Mammary epithelial cell (primary cell): ENCODE measurements at regions of chr2 and their contacts with region 1.

Region 1: DNA sequence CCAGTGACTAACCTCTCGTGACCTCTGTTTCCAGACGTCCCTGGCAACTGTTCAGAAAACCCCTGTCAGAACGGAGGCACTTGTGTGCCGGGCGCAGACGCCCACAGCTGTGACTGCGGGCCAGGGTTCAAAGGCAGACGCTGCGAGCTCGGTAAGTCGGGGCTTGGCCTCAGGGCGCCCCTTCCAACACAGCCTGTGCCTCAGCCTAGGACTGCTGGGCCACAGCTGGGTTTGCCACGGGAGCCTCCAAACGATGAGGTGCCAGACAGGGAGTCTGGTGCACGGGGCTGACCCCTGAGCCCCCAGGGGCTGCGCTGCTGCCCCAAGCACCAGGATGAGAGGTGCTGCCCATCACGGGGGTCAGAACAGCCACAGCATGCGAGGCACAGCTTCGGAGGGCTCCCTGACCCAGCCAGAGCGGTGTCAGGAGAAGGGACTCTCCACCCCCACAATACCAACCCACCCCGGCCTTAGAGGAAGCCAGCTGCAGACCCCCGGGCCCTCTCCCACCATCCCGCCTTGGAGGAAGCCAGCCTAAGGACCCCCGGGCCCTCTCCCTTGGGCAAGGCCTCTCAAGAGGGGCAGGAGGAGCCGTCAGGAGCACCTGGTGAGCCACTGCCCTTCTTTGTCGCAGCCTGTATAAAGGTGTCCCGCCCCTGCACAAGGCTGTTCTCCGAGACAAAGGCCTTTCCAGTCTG is 20.3 kb downstream of the MTERF4 start:
- DNase-seq: no peak
- H3K4me3 ChIP-seq: no peak overlapping the region
- H3K27ac ChIP-seq: no peak overlapping the region
- H3K4me1 ChIP-seq: no peaks in the 10 kb centered on the region
- H3K27me3 ChIP-seq: no peaks in the 10 kb centered on the region
- CTCF ChIP-seq: no peak

Region 2: GRCh38 chr2:240913810-240914644 is 167.8 kb before region 1 on chr2:
- CTCF ChIA-PET with region 1: no interaction called
- dilution Hi-C with region 1: no loop called
- in situ Hi-C with region 1: no loop called
- intact Hi-C with region 1: loop called (anchors 1 kb)
- DNase-seq: no peak
- H3K4me3 ChIP-seq: no peak overlapping the region
- H3K27ac ChIP-seq: no peak overlapping the region
- H3K4me1 ChIP-seq: peaks cover 27% of the 10 kb centered on the region
- H3K27me3 ChIP-seq: peaks cover 7% of the 10 kb centered on the region
- CTCF ChIP-seq: peak; percentile 65 to 91

Region 3: GRCh38 chr2:240974771-240975572 is 106.8 kb before region 1 on chr2:
- CTCF ChIA-PET with region 1: no interaction called
- dilution Hi-C with region 1: no loop called
- in situ Hi-C with region 1: no loop called
- intact Hi-C with region 1: no loop called
- DNase-seq: no peak
- H3K4me3 ChIP-seq: no peak overlapping the region
- H3K27ac ChIP-seq: no peak overlapping the region
- H3K4me1 ChIP-seq: peaks cover 11% of the 10 kb centered on the region
- H3K27me3 ChIP-seq: peaks cover 4% of the 10 kb centered on the region
- CTCF ChIP-seq: no peak

Region 4: GRCh38 chr2:241041589-241042158 is 40.1 kb before region 1 on chr2:
- CTCF ChIA-PET with region 1: no interaction called
- dilution Hi-C with region 1: loop called (anchors 5 kb)
- in situ Hi-C with region 1: no loop called
- intact Hi-C with region 1: no loop called
- DNase-seq: no peak
- H3K4me3 ChIP-seq: no peak overlapping the region
- H3K27ac ChIP-seq: no peak overlapping the region
- H3K4me1 ChIP-seq: peaks cover 2% of the 10 kb centered on the region
- H3K27me3 ChIP-seq: peaks cover 7% of the 10 kb centered on the region
- CTCF ChIP-seq: no peak

Region 5: GRCh38 chr2:241123816-241124536 is 42.2 kb after region 1 on chr2:
- CTCF ChIA-PET with region 1: no interaction called
- dilution Hi-C with region 1: no loop called
- in situ Hi-C with region 1: no loop called
- intact Hi-C with region 1: no loop called
- DNase-seq: peak; percentile 78
- H3K4me3 ChIP-seq: no peak overlapping the region
- H3K27ac ChIP-seq: no peak overlapping the region
- H3K4me1 ChIP-seq: peaks cover 11% of the 10 kb centered on the region
- H3K27me3 ChIP-seq: no peaks in the 10 kb centered on the region
- CTCF ChIP-seq: no peak

Region 6: DNA sequence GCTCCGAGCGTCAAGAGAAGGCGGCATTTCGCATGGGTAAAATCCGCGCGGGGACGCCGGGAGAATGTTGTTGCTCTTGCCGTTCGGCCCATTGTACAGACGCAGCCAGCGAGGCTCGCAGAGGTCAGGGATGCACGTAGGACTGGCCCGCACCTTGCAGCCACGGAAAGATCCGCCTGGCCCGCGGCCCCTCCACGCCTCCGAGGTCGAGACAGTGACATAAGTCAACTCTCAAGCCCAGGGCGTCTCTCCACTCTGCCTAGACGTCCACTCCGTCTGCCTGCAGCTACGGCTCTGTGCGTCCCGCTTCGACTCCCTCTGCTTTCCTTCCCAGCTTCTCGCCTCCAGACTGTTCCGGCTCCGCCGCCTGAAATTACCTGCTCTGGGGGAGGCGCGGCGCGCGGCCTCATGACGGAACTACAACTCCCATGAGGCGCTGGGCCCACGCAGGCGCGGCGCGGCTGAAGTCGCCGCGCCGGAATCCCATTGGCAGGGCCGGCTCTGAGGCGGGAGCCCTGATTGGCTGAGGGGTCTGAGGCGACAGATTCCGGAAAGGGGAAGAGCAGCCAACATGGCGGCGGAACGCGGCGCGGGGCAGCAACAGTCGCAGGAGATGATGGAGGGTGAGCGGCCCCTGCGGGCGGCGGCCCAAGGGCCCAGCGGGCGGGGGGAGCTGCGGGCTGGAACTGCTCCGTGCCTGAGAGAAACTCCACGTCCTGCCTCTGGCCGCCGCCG is 68.3 kb after region 1 on chr2 and contains the start of gene PPP1R7:
- CTCF ChIA-PET with region 1: interaction called, 12 read pairs
- dilution Hi-C with region 1: loop called (anchors 5 kb)
- in situ Hi-C with region 1: no loop called
- intact Hi-C with region 1: loop called (anchors 2 kb)
- DNase-seq: peak; percentile 94
- H3K4me3 ChIP-seq: peak within 1 kb of the TSS; percentile 69 to 85 (median 80)
- H3K27ac ChIP-seq: peak within 1 kb of the TSS; percentile 56
- H3K4me1 ChIP-seq: peaks cover 22% of the 10 kb centered on the region
- H3K27me3 ChIP-seq: no peaks in the 10 kb centered on the region
- CTCF ChIP-seq: no peak
- total RNA-seq, gene PPP1R7: 39.2 to 66.5 TPM

Region 7: GRCh38 chr2:241156971-241157441 is 75.2 kb after region 1 on chr2:
- CTCF ChIA-PET with region 1: no interaction called
- dilution Hi-C with region 1: loop called (anchors 5 kb)
- in situ Hi-C with region 1: no loop called
- intact Hi-C with region 1: no loop called
- DNase-seq: no peak
- H3K4me3 ChIP-seq: no peak overlapping the region
- H3K27ac ChIP-seq: no peak overlapping the region
- H3K4me1 ChIP-seq: peaks cover 9% of the 10 kb centered on the region
- H3K27me3 ChIP-seq: no peaks in the 10 kb centered on the region
- CTCF ChIP-seq: no peak

Region 8: GRCh38 chr2:241289597-241289996 is 207.8 kb after region 1 on chr2:
- CTCF ChIA-PET with region 1: no interaction called
- dilution Hi-C with region 1: no loop called
- in situ Hi-C with region 1: no loop called
- intact Hi-C with region 1: loop called (anchors 2 kb)
- DNase-seq: no peak
- H3K4me3 ChIP-seq: no peak overlapping the region
- H3K27ac ChIP-seq: no peak overlapping the region
- H3K4me1 ChIP-seq: peaks cover 23% of the 10 kb centered on the region
- H3K27me3 ChIP-seq: no peaks in the 10 kb centered on the region
- CTCF ChIP-seq: peak; percentile 1 to 26

Region 9: GRCh38 chr2:241659150-241659739 is 577.5 kb after region 1 on chr2:
- CTCF ChIA-PET with region 1: no interaction called
- dilution Hi-C with region 1: no loop called
- in situ Hi-C with region 1: no loop called
- intact Hi-C with region 1: loop called (anchors 2 kb)
- DNase-seq: peak; percentile 44
- H3K4me3 ChIP-seq: no peak overlapping the region
- H3K27ac ChIP-seq: no peak overlapping the region
- H3K4me1 ChIP-seq: no peaks in the 10 kb centered on the region
- H3K27me3 ChIP-seq: no peaks in the 10 kb centered on the region
- CTCF ChIP-seq: peak; percentile 53 to 64